Panc1 (cell line): ENCODE measurements at regions of chr2 and their contacts with region 1.

Region 1: DNA sequence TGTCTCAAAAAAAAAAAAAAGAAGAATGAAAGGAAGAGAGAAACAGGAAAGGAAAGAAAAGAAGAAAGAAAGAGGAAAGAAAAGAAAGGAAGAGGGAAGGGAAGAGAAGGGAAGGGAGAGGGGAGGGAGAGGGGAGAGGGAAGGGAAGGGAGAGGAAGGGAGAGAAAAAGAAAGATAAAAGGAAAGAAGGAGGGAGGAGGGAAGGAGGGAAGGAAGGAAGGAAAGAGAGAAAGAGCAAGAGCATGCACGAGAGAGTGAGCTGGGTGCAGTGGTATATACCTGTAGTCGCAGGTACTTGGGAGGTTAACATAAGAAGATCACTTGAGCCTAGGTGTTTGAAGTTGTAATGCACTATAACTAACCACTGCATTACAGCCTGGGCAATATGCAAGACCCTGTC is 6.6 kb upstream of the BAZ2B start:
- DNase-seq: no peak
- ATAC-seq: no peak
- H3K4me3 ChIP-seq: no peak overlapping the region
- H3K27ac ChIP-seq: no peak overlapping the region
- H3K4me1 ChIP-seq: peaks cover 1% of the 10 kb centered on the region; the same call in 1 of the 2 replicates
- H3K27me3 ChIP-seq: no peaks in the 10 kb centered on the region
- CTCF ChIP-seq: no peak

Region 2: DNA sequence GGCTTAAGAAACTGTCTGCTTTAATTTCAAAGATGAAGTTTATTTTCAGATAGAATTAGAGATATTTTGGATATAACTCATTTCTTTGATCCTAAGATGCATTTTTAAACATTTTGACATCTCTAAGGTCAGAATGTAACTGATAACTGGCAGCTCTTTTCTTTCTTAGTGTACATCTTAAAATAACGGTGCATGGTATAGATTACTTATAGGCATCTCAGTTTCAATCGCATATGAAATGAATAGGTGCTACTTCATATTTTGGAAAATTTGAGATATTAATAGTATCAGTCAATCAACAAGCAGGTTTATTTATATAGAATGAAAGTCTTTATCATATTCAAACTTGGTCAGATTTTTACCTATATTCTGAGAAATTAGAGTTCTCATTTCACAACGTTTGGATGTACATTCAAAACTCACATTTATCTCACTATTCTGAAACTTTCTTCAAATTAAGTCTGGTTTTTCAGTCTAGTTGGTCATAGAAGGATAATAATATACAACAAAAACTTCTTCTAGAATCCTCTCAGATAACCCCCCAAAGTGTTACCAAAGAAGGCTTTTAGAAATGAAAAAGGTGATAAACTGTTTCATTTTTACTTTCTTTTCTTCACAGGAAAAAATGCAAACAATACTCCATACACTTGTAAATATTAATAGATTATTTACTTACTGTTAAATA is 213.7 kb before region 1 on chr2:
- CTCF ChIA-PET with region 1: no interaction called
- POLR2A ChIA-PET with region 1: interaction called, 10 read pairs
- in situ Hi-C with region 1: no loop called
- intact Hi-C with region 1: no loop called
- DNase-seq: no peak
- ATAC-seq: no peak
- H3K4me3 ChIP-seq: no peak overlapping the region
- H3K27ac ChIP-seq: no peak overlapping the region
- H3K4me1 ChIP-seq: no peaks in the 10 kb centered on the region
- H3K27me3 ChIP-seq: no peaks in the 10 kb centered on the region
- CTCF ChIP-seq: no peak